ENCODE measurements at regions of chr2 and their contacts with region 1.

Region 1: GRCh38 chr2:118481299-118481698 is 366.1 kb downstream of the EN1 start:
- DNase-seq: no peak
- H3K4me3 ChIP-seq: no peak overlapping the region
- H3K27ac ChIP-seq: no peak overlapping the region
- H3K4me1 ChIP-seq: no peaks in the 10 kb centered on the region
- H3K27me3 ChIP-seq: no peaks in the 10 kb centered on the region
- CTCF ChIP-seq: no peak
- POLR2A ChIP-seq: no peak

Region 2: GRCh38 chr2:120150040-120150482 is 1668.8 kb after region 1 on chr2:
- intact Hi-C with region 1: loop called (anchors 10 kb)
- DNase-seq: no peak
- H3K4me3 ChIP-seq: no peak overlapping the region
- H3K27ac ChIP-seq: no peak overlapping the region
- H3K4me1 ChIP-seq: no peaks in the 10 kb centered on the region
- H3K27me3 ChIP-seq: no peaks in the 10 kb centered on the region
- CTCF ChIP-seq: no peak
- POLR2A ChIP-seq: no peak